Naive thymus-derived CD4-positive, alpha-beta T cell (primary cell): ENCODE measurements at regions of chr9 and their contacts with region 1.

Region 1: DNA sequence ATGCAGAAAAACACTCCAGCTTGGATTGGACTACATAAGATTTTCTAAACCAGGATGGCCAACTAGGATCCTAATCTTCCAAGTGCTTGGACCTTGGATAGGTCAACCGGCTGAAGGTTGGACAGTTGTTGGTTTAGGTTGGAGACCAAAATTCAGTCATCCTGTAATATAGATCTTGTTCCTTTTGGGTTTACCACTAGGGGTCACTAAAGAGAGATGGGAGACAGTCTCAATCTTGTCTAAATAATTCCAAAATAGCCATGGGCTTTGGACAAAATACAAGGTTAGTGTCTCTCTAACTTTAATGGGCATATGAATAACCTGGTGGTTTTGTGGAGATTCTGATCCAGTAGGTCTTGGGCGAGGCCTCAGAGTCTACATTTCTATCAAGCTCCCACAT is 148.7 kb upstream of the ERCC6L2 start:
- DNase-seq: peak in 1 of 9 donors; percentile 31
- ATAC-seq: no peak
- H3K4me3 ChIP-seq: no peak overlapping the region
- H3K4me3 Mint-ChIP-seq: peak overlapping the region in 1 of 10 donors; percentile 20
- H3K27ac ChIP-seq: no peak overlapping the region
- H3K27ac Mint-ChIP-seq: no peak overlapping the region
- H3K4me1 ChIP-seq: peaks cover 18 to 24% of the 10 kb centered on the region in 2 donors
- H3K4me1 Mint-ChIP-seq: peaks cover 33 to 58% (median 49%) of the 10 kb centered on the region in 7 donors
- H3K27me3 ChIP-seq: no peaks in the 10 kb centered on the region
- H3K27me3 Mint-ChIP-seq: peaks cover 0 to 31% (median 0%) of the 10 kb centered on the region in 5 donors

Region 2: GRCh38 chr9:94860968-94861871 is 865.5 kb before region 1 on chr9:
- CTCF ChIA-PET with region 1: no interaction called
- POLR2A ChIA-PET with region 1: no interaction called
- intact Hi-C with region 1: loop called in 1 of 2 experiments (anchors 5 kb)
- DNase-seq: peak; percentile 31 to 86 (median 78)
- ATAC-seq: peak; percentile 93
- H3K4me3 ChIP-seq: peak overlapping the region; percentile 40
- H3K4me3 Mint-ChIP-seq: peak overlapping the region; percentile 73 to 85 (median 82)
- H3K27ac ChIP-seq: no peak overlapping the region
- H3K27ac Mint-ChIP-seq: peak overlapping the region; percentile 25 to 96 (median 92)
- H3K4me1 ChIP-seq: peaks cover 25 to 26% of the 10 kb centered on the region in 2 donors
- H3K4me1 Mint-ChIP-seq: peaks cover 26 to 55% (median 47%) of the 10 kb centered on the region in 7 donors
- H3K27me3 ChIP-seq: no peaks in the 10 kb centered on the region
- H3K27me3 Mint-ChIP-seq: no peaks in the 10 kb centered on the region

Region 3: GRCh38 chr9:95611354-95611753 is 115.4 kb before region 1 on chr9:
- CTCF ChIA-PET with region 1: no interaction called
- POLR2A ChIA-PET with region 1: no interaction called
- intact Hi-C with region 1: no loop called
- DNase-seq: no peak
- ATAC-seq: no peak
- H3K4me3 ChIP-seq: no peak overlapping the region
- H3K4me3 Mint-ChIP-seq: no peak overlapping the region
- H3K27ac ChIP-seq: no peak overlapping the region
- H3K27ac Mint-ChIP-seq: peak overlapping the region in 1 of 9 donors; percentile 29
- H3K4me1 ChIP-seq: no peaks in the 10 kb centered on the region
- H3K4me1 Mint-ChIP-seq: no peaks in the 10 kb centered on the region
- H3K27me3 ChIP-seq: no peaks in the 10 kb centered on the region
- H3K27me3 Mint-ChIP-seq: peaks cover 6 to 10% (median 7%) of the 10 kb centered on the region in 5 donors

Region 4: GRCh38 chr9:95634536-95634935 is 92.2 kb before region 1 on chr9:
- CTCF ChIA-PET with region 1: no interaction called
- POLR2A ChIA-PET with region 1: no interaction called
- intact Hi-C with region 1: loop called in 1 of 2 experiments (anchors 10 kb)
- DNase-seq: no peak
- ATAC-seq: no peak
- H3K4me3 ChIP-seq: no peak overlapping the region
- H3K4me3 Mint-ChIP-seq: no peak overlapping the region
- H3K27ac ChIP-seq: no peak overlapping the region
- H3K27ac Mint-ChIP-seq: no peak overlapping the region
- H3K4me1 ChIP-seq: no peaks in the 10 kb centered on the region
- H3K4me1 Mint-ChIP-seq: peaks cover 0 to 4% (median 0%) of the 10 kb centered on the region in 7 donors
- H3K27me3 ChIP-seq: peaks cover 0 to 7% of the 10 kb centered on the region in 2 donors
- H3K27me3 Mint-ChIP-seq: peaks cover 0 to 42% (median 12%) of the 10 kb centered on the region in 5 donors

Region 5: GRCh38 chr9:96009690-96010472 is 283.1 kb after region 1 on chr9:
- CTCF ChIA-PET with region 1: no interaction called
- POLR2A ChIA-PET with region 1: no interaction called
- intact Hi-C with region 1: loop called in 1 of 2 experiments (anchors 1 kb)
- DNase-seq: peak in 5 of 9 donors; percentile 44 to 68 (median 62)
- ATAC-seq: peak; percentile 83
- H3K4me3 ChIP-seq: no peak overlapping the region
- H3K4me3 Mint-ChIP-seq: peak overlapping the region; percentile 25 to 75 (median 56)
- H3K27ac ChIP-seq: peak overlapping the region; percentile 68
- H3K27ac Mint-ChIP-seq: peak overlapping the region in 8 of 9 donors; percentile 65 to 98 (median 92)
- H3K4me1 ChIP-seq: peaks cover 43 to 57% of the 10 kb centered on the region in 2 donors
- H3K4me1 Mint-ChIP-seq: peaks cover 0 to 55% (median 24%) of the 10 kb centered on the region in 7 donors
- H3K27me3 ChIP-seq: no peaks in the 10 kb centered on the region
- H3K27me3 Mint-ChIP-seq: no peaks in the 10 kb centered on the region

Region 6: DNA sequence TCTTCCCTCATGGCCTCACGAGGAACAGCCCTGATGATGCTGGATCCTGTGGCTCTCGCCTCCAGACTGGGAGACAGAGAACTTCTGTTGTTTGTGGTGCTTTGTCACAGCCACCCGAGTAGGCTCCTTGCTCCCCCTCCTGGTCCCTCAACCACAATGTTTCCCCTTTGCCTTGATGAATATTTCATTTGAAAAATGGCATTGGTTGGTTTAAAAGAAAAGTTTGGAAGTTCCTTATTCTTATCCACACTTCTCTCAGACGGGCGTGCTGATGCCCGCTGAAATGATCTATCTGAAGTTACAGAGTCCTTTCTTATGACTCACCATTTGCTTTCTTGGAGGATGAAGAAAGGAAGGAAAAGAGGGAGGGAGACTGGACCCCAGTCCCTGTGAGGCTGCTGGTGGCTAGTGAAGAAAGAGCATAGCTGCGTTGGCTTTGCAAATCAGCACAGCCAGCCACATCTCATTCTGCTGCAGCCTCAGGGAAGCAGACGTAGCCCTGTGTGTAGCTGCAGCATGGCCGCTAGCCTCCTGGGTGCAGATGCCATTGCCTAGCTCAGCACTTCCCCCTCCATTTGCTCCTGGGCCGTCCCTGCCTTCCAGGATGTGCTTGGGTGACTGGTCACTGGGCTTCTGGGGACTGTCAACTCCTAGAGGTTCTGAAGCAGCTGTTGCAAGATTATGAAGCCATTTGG is 334.7 kb after region 1 on chr9:
- CTCF ChIA-PET with region 1: no interaction called
- POLR2A ChIA-PET with region 1: no interaction called
- intact Hi-C with region 1: loop called in 1 of 2 experiments (anchors 1 kb)
- DNase-seq: peak in 8 of 9 donors; percentile 23 to 66 (median 50)
- ATAC-seq: peak; percentile 69
- H3K4me3 ChIP-seq: no peak overlapping the region
- H3K4me3 Mint-ChIP-seq: no peak overlapping the region
- H3K27ac ChIP-seq: no peak overlapping the region
- H3K27ac Mint-ChIP-seq: peak overlapping the region in 2 of 9 donors; percentile 63 to 73
- H3K4me1 ChIP-seq: no peaks in the 10 kb centered on the region
- H3K4me1 Mint-ChIP-seq: peaks cover 0 to 22% (median 6%) of the 10 kb centered on the region in 7 donors
- H3K27me3 ChIP-seq: no peaks in the 10 kb centered on the region
- H3K27me3 Mint-ChIP-seq: no peaks in the 10 kb centered on the region